A549 (cell line): ENCODE measurements at regions of chr11 and their contacts with region 1.

Region 1: GRCh38 chr11:18243783-18244362 is 4.6 kb downstream of the SAA2 start:
- DNase-seq: peak; percentile 67 to 80
- ATAC-seq: peak in 1 of 2 experiments; percentile 81; a peak in 3 of 6 replicates
- H3K4me3 ChIP-seq: no peak overlapping the region
- H3K27ac ChIP-seq: no peak overlapping the region
- H3K4me1 ChIP-seq: no peaks in the 10 kb centered on the region
- CTCF ChIP-seq: peak; percentile 77
- EP300 ChIP-seq: no peak
- POLR2A ChIP-seq: no peak
- RAD21 ChIP-seq: peak; percentile 73 to 90

Region 2: DNA sequence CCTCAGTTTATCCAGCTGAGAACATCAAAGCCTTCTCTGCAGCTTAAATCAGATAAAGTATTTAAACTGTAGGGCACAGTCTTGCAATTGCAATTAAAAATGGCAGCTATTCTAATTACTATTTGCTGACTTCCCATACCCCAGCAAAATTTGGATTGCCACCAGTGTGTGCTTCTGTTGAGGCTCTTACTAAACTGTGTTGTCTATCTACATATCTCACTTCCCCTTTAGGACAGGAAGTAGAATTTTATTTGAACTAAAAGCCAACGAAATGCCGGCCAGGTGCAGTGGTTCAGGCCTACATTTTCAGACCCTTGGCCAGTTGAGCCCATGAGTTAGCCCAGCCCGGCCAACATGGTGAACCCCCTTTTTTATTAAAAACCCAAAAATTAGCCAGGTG is 14.4 kb before region 1 on chr11:
- CTCF ChIA-PET with region 1: interaction called, 12 read pairs
- POLR2A ChIA-PET with region 1: no interaction called
- DNase-seq: no peak
- ATAC-seq: no peak
- H3K4me3 ChIP-seq: no peak overlapping the region
- H3K27ac ChIP-seq: no peak overlapping the region
- H3K4me1 ChIP-seq: no peaks in the 10 kb centered on the region
- CTCF ChIP-seq: no peak
- EP300 ChIP-seq: no peak
- POLR2A ChIP-seq: no peak
- RAD21 ChIP-seq: no peak

Region 3: DNA sequence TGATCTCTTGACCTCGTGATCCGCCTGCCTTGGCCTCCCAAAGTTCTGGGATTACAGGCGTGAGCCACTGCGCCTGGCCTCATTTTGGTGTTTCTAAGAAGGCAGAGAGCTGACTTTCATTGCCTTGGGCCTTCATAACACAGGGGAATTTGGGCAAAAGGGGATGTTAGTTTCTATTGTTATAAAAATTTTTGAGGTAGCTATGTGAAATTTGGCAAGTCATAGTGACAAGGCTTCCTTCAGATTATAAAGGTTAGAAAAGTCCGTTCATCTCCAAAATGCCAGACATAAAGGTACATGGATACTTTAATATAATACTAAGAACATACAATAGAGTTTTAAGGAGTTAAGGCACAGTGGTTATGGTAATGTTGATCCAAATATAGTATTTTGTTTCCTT is 185.5 kb after region 1 on chr11:
- CTCF ChIA-PET with region 1: no interaction called
- POLR2A ChIA-PET with region 1: no interaction called
- DNase-seq: no peak
- ATAC-seq: no peak
- H3K4me3 ChIP-seq: no peak overlapping the region
- H3K27ac ChIP-seq: no peak overlapping the region
- H3K4me1 ChIP-seq: no peaks in the 10 kb centered on the region; the same call in 2 of the 3 replicates
- CTCF ChIP-seq: no peak
- EP300 ChIP-seq: no peak
- POLR2A ChIP-seq: no peak
- RAD21 ChIP-seq: no peak